Caco-2 (cell line): ENCODE measurements at regions of chr10 and their contacts with region 1.

Region 1: GRCh38 chr10:53903756-53904155 is 897.3 kb downstream of the PCDH15 start:
- DNase-seq: no peak
- H3K4me3 ChIP-seq: no peak overlapping the region
- H3K4me3 Mint-ChIP-seq: no peak overlapping the region
- H3K27ac Mint-ChIP-seq: no peak overlapping the region
- H3K4me1 ChIP-seq: peaks cover 55% of the 10 kb centered on the region
- H3K4me1 Mint-ChIP-seq: no peaks in the 10 kb centered on the region
- H3K27me3 ChIP-seq: no peaks in the 10 kb centered on the region
- H3K27me3 Mint-ChIP-seq: no peaks in the 10 kb centered on the region
- CTCF ChIP-seq: no peak

Region 2: DNA sequence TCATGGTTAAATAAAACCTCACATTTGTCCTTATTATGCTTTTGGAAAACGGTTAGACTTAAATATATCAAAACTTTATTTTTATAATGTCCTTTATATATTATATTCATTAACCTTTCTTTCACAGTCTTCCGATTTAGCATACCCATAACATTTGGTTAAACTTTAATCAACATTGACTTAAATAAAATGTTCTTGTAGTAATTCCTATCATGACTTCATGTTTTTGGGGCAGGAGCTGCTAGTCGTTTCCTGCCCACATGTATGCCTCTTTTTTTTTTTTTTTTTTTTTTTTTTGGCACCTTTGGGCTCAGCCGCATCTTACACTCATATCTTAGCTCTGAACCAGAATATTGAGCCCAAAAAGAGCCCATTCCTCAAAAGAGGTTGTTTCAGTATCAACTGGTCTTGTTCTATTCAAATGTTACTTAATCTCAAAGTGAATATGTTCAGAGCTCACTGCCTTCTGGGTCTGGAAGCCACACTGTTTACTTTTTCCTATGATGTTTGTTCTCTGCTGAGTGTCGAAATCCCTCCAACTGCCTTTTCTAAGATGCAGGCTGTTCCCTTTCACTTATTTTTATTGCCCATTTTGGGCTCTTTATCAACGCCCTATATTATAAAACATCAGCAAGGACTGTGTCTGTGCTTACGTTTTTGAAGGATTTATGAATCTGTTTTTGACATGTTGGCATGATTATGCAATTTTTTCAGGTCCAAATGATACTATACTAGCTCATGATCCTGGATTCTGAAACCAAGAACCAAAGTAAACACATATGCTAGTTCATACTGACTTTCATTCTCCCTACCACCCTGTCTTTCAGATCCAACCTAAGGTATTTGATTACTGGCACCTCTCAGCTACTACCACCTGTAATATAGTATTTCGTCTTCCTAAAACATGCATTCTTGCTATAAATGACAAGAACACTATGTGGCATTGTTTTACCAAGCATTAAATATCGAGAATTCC is 17.1 kb before region 1 on chr10:
- CTCF ChIA-PET with region 1: no interaction called
- POLR2A ChIA-PET with region 1: no interaction called
- intact Hi-C with region 1: loop called (anchors 1 kb)
- DNase-seq: peak in 1 of 2 experiments; percentile 62
- H3K4me3 ChIP-seq: no peak overlapping the region
- H3K4me3 Mint-ChIP-seq: peak overlapping the region; percentile 54
- H3K27ac Mint-ChIP-seq: peak overlapping the region; percentile 37
- H3K4me1 ChIP-seq: peaks cover 5% of the 10 kb centered on the region
- H3K4me1 Mint-ChIP-seq: peaks cover 20% of the 10 kb centered on the region
- H3K27me3 ChIP-seq: no peaks in the 10 kb centered on the region
- H3K27me3 Mint-ChIP-seq: no peaks in the 10 kb centered on the region
- CTCF ChIP-seq: no peak

Region 3: DNA sequence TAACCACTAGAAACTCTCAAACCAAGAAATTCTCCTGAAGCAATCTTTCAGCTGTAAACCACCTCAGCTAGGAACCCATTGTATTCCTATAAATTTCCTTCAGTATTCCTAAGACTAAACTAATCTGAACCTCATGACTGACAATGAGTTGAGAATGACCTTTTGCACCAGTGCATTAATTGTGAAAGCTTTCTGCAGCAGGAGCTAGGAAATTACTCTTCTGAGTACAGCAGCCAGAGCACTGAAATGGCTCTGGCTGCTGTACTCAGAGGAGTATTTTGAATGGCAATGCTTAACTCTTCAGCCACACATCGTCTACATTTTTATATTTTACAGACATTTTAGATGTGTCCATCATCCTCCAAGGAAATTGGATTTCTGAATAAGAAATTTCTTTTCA is 787.6 kb after region 1 on chr10:
- CTCF ChIA-PET with region 1: no interaction called
- POLR2A ChIA-PET with region 1: no interaction called
- intact Hi-C with region 1: no loop called
- DNase-seq: no peak
- H3K4me3 ChIP-seq: no peak overlapping the region
- H3K4me3 Mint-ChIP-seq: no peak overlapping the region
- H3K27ac Mint-ChIP-seq: no peak overlapping the region
- H3K4me1 ChIP-seq: no peaks in the 10 kb centered on the region
- H3K4me1 Mint-ChIP-seq: no peaks in the 10 kb centered on the region
- H3K27me3 ChIP-seq: no peaks in the 10 kb centered on the region
- H3K27me3 Mint-ChIP-seq: no peaks in the 10 kb centered on the region
- CTCF ChIP-seq: no peak